GM12878 (cell line): ENCODE measurements at regions of chr14 and their contacts with region 1.

Region 1: DNA sequence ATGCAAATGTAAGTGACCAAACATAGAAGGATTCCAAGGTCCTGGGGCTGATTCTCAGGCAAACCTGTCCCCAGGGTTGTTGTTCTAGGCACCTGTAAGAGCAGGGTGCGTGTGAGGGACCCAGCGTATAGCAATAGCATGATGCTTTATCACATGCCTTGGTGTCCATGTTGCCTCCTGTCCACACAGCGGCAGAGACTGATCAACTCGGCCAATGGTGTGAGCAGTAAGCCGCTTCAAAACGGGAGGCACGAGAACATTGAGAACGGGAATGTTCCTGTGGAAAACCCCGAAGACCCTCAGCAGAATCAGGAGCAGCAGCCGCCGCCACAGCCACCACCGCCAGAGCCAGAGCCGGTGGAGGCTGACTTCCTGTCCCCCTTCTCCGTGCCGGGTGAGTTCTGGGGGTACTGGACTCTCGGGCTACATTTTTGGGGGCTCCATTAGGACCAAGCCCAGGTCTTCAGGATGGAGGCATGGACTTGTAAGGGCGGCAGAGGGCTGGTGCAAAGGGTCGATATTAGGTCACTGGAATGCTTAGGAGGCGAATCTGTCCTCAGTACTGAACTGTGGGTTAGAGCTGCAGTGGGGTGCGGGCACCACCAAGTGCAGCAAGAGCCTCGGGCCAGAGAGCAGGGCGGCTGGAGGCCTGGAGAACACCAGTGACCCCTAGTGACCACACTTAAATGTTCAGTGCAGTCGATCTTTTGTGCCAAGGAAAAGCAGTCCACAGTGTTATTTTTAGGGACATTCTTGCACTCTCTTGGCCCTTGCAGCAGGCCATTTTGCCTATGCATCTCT is 57.2 kb upstream of the RIN3 start:
- DNase-seq: no peak
- ATAC-seq: peak; percentile 84
- H3K4me3 ChIP-seq: no peak overlapping the region
- H3K27ac ChIP-seq: no peak overlapping the region
- H3K4me1 ChIP-seq: peaks cover 9% of the 10 kb centered on the region
- H3K27me3 ChIP-seq: no peaks in the 10 kb centered on the region
- CTCF ChIP-seq: peak; percentile 75 to 89 (median 76)
- EP300 ChIP-seq: no peak
- POLR2A ChIP-seq: no peak
- RAD21 ChIP-seq: peak; percentile 75

Region 2: DNA sequence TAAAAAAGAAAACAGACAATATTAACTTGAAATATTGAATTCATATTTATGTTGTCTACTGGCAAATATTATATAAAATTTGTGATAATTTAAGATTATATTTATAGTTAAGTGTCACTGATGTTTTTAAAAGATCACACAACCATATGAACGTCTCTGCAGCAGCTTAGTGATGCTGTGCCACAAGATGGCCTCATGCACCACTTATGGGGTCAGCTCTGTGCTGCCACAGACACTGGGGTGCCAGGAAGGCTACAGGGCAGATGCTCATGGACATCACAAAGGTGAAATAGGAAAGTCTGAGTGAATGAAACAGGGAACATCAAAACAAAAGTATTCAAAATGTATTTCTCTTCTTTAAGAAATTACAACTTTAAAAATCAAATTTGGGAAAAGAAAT is 363.1 kb before region 1 on chr14:
- CTCF ChIA-PET with region 1: no interaction called
- POLR2A ChIA-PET with region 1: no interaction called
- RAD21 ChIA-PET with region 1: no interaction called
- SMC1A ChIA-PET with region 1: no interaction called
- in situ Hi-C with region 1: no loop called
- intact Hi-C with region 1: loop called (anchors 5 kb)
- DNase-seq: no peak
- ATAC-seq: peak; percentile 79
- H3K4me3 ChIP-seq: no peak overlapping the region
- H3K27ac ChIP-seq: no peak overlapping the region
- H3K4me1 ChIP-seq: no peaks in the 10 kb centered on the region
- H3K27me3 ChIP-seq: no peaks in the 10 kb centered on the region
- CTCF ChIP-seq: peak in 2 of 3 experiments; percentile 31 to 54; a peak in 3 of 6 replicates
- EP300 ChIP-seq: no peak
- POLR2A ChIP-seq: no peak
- RAD21 ChIP-seq: peak; percentile 40

Region 3: GRCh38 chr14:92473261-92473968 is 17.0 kb after region 1 on chr14:
- CTCF ChIA-PET with region 1: interaction called, 14 read pairs
- POLR2A ChIA-PET with region 1: no interaction called
- RAD21 ChIA-PET with region 1: interaction called, 3 read pairs
- SMC1A ChIA-PET with region 1: interaction called, 10 read pairs
- in situ Hi-C with region 1: no loop called
- intact Hi-C with region 1: no loop called
- DNase-seq: no peak
- ATAC-seq: no peak
- H3K4me3 ChIP-seq: no peak overlapping the region
- H3K27ac ChIP-seq: no peak overlapping the region
- H3K4me1 ChIP-seq: no peaks in the 10 kb centered on the region
- H3K27me3 ChIP-seq: no peaks in the 10 kb centered on the region
- CTCF ChIP-seq: no peak
- EP300 ChIP-seq: no peak
- POLR2A ChIP-seq: no peak
- RAD21 ChIP-seq: no peak